ENCODE measurements at regions of chr4 and their contacts with region 1.

Region 1: DNA sequence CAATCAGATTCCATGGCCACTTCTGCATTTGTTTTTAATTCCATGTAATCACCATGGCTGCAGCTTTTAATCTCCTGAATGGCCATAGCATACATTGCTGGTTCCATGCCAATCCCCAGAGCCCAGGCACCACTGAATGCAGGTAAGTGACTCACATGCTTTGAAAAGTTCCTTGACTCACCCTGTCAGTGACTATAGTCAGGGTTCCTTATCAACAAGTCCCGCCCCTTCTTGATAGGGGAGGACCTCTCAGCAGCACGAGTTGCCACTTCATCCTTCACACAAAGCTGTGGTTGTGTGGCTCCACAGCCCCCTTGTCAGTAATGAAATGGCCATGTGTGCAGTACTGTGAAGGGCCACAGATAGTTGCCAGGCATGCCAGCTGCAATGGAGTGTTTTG is 516.6 kb downstream of the PPARGC1A start:
- DNase-seq: peak; percentile 69
- H3K4me3 Mint-ChIP-seq: no peak overlapping the region
- H3K27ac Mint-ChIP-seq: peak overlapping the region; percentile 15
- H3K4me1 Mint-ChIP-seq: peaks cover 5% of the 10 kb centered on the region
- H3K27me3 Mint-ChIP-seq: no peaks in the 10 kb centered on the region

Region 2: GRCh38 chr4:23097251-23097650 is 276.0 kb before region 1 on chr4:
- CTCF ChIA-PET with region 1: no interaction called
- intact Hi-C with region 1: no loop called
- DNase-seq: no peak
- H3K4me3 Mint-ChIP-seq: no peak overlapping the region
- H3K27ac Mint-ChIP-seq: no peak overlapping the region
- H3K4me1 Mint-ChIP-seq: no peaks in the 10 kb centered on the region
- H3K27me3 Mint-ChIP-seq: no peaks in the 10 kb centered on the region

Region 3: GRCh38 chr4:23135792-23136645 is 237.2 kb before region 1 on chr4:
- CTCF ChIA-PET with region 1: no interaction called
- intact Hi-C with region 1: loop called (anchors 10 kb)
- DNase-seq: no peak
- H3K4me3 Mint-ChIP-seq: no peak overlapping the region
- H3K27ac Mint-ChIP-seq: no peak overlapping the region
- H3K4me1 Mint-ChIP-seq: no peaks in the 10 kb centered on the region
- H3K27me3 Mint-ChIP-seq: peaks cover 10% of the 10 kb centered on the region

Region 4: GRCh38 chr4:23290656-23291055 is 82.6 kb before region 1 on chr4:
- CTCF ChIA-PET with region 1: no interaction called
- intact Hi-C with region 1: loop called (anchors 2 kb)
- DNase-seq: no peak
- H3K4me3 Mint-ChIP-seq: no peak overlapping the region
- H3K27ac Mint-ChIP-seq: no peak overlapping the region
- H3K4me1 Mint-ChIP-seq: peaks cover 17% of the 10 kb centered on the region
- H3K27me3 Mint-ChIP-seq: no peaks in the 10 kb centered on the region

Region 5: DNA sequence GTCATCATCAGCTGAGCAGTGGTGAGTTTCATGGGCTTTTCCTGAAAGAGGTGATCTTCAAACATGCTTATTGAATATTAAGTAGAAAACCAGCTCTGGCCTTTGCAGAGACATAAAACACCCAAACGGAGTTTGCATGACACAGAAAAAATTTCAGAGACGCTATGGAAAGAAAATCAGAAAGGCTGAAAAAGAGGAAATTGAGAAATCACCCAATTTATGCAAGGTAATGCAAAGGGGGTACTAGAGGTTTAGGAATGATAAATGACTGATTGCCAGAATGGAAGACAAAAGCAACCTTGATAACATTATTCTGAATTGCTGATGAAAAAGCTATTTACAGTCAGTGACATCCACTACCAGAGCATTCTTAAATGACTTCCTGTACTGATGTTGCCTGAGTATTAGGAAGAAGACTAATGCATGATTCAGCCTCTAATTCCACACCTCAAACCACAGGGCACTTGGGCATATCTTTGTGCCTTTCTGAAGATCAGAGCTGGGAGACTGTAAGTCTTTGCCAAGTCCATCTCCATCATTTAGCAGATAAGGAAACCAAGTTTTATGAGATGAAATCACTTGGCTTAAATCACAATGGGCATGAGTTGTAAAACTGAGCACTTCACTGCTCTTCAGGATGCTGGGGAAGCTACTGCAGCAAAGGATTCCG is 49.1 kb before region 1 on chr4:
- CTCF ChIA-PET with region 1: no interaction called
- intact Hi-C with region 1: no loop called
- DNase-seq: peak; percentile 12
- H3K4me3 Mint-ChIP-seq: no peak overlapping the region
- H3K27ac Mint-ChIP-seq: no peak overlapping the region
- H3K4me1 Mint-ChIP-seq: peaks cover 27% of the 10 kb centered on the region
- H3K27me3 Mint-ChIP-seq: no peaks in the 10 kb centered on the region

Region 6: DNA sequence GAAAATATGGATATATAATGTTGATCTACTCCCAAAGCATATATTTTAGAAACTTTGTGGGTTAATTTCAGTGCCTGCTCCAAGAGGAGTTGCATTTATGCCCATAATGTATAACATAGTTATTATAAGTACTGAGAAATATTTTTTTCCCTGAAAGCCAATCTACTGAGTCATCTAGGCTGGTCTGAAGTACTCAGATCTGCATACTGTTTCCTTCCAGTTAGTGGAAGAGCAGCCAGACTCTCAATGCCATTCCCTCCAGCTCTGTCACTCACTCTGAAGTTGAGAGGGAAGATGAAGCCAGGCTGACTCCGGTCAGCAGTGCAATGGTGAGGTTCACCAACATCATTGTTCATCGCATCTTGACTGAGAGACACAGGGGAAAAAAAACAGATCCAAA is 11.5 kb after region 1 on chr4:
- CTCF ChIA-PET with region 1: no interaction called
- intact Hi-C with region 1: no loop called
- DNase-seq: no peak
- H3K4me3 Mint-ChIP-seq: no peak overlapping the region
- H3K27ac Mint-ChIP-seq: no peak overlapping the region
- H3K4me1 Mint-ChIP-seq: no peaks in the 10 kb centered on the region
- H3K27me3 Mint-ChIP-seq: peaks cover 5% of the 10 kb centered on the region

Region 7: GRCh38 chr4:23413631-23414030 is 40.4 kb after region 1 on chr4:
- CTCF ChIA-PET with region 1: no interaction called
- intact Hi-C with region 1: loop called (anchors 2 kb)
- DNase-seq: no peak
- H3K4me3 Mint-ChIP-seq: no peak overlapping the region
- H3K27ac Mint-ChIP-seq: no peak overlapping the region
- H3K4me1 Mint-ChIP-seq: peaks cover 7% of the 10 kb centered on the region
- H3K27me3 Mint-ChIP-seq: peaks cover 2% of the 10 kb centered on the region